Activated T-helper 2 cell treated with anti-CD3 and anti-CD28 coated beads, Interferon-gamma antibody, Interleukin-2, Interleukin-4, amounts not matched to agents 10 μg/mL and 5 μg/mL and 100 μg/mL, durations not matched to agents 14 hours and 24 hours and 36 hours (primary cell): ENCODE measurements at regions of chr1 and their contacts with region 1.

Region 1: GRCh38 chr1:70685300-70686241 is 274.5 kb downstream of the CTH start:
- DNase-seq: peak; percentile 40
- H3K4me3 Mint-ChIP-seq: no peak overlapping the region
- H3K27ac Mint-ChIP-seq: no peak overlapping the region
- H3K4me1 Mint-ChIP-seq: peaks cover 2% of the 10 kb centered on the region
- H3K27me3 Mint-ChIP-seq: peaks cover 16% of the 10 kb centered on the region

Region 2: DNA sequence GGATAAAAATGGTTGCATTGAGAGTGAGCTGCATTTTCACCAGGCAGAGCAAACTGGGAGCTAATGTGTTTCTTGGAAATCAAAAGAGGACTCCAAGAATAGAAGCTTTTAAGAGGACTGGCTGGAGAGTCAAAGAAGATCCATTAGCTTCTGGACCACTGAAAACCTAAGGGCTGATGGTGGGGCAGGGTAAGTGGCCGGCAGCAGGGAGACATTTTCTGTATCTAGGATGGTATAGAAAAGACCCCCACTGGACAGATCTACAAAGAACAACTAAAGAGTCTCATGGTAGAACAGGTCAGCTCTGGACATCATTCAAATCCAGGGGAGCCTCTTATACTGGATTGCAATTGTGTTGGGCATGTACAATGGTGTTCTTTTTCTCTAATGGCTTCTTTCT is 99.7 kb after region 1 on chr1:
- intact Hi-C with region 1: loop called (anchors 10 kb)
- DNase-seq: no peak
- H3K4me3 Mint-ChIP-seq: no peak overlapping the region
- H3K27ac Mint-ChIP-seq: no peak overlapping the region
- H3K4me1 Mint-ChIP-seq: no peaks in the 10 kb centered on the region
- H3K27me3 Mint-ChIP-seq: peaks cover 15% of the 10 kb centered on the region

Region 3: DNA sequence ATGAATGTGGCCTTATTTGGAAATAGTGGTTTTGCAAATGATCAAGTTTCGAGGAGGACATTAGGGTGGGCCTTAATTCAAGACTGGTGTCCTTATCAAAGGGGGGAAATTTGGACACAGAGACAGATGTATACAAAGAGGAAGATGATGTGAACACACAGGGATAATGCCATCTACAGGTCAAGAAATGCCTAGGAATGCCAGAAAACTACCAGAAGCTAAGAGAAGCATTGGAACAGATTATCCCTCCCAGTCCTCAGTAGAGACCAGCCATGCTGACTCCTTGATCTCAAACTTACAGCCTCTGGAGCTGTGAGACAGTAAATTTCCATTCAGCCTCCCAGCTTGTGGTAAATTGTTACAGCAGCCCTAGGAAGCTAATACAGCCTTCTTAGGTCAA is 210.7 kb after region 1 on chr1:
- intact Hi-C with region 1: loop called (anchors 5 kb)
- DNase-seq: no peak
- H3K4me3 Mint-ChIP-seq: no peak overlapping the region
- H3K27ac Mint-ChIP-seq: no peak overlapping the region
- H3K4me1 Mint-ChIP-seq: peaks cover 7% of the 10 kb centered on the region
- H3K27me3 Mint-ChIP-seq: peaks cover 32% of the 10 kb centered on the region